Activated naive CD4-positive, alpha-beta T cell treated with anti-CD3 and anti-CD28 coated beads for 36 hours (primary cell): ENCODE measurements at regions of chr1 and their contacts with region 1.

Region 1: GRCh38 chr1:12344596-12345349 is 114.9 kb downstream of the VPS13D start:
- DNase-seq: peak; percentile 59
- H3K4me3 Mint-ChIP-seq: peak overlapping the region; percentile 51
- H3K27ac Mint-ChIP-seq: peak overlapping the region; percentile 82
- H3K4me1 Mint-ChIP-seq: peaks cover 61% of the 10 kb centered on the region
- H3K27me3 Mint-ChIP-seq: no peaks in the 10 kb centered on the region

Region 2: GRCh38 chr1:12208764-12209494 is 135.8 kb before region 1 on chr1:
- CTCF ChIA-PET with region 1: no interaction called
- intact Hi-C with region 1: no loop called
- DNase-seq: peak; percentile 95
- H3K4me3 Mint-ChIP-seq: no peak overlapping the region
- H3K27ac Mint-ChIP-seq: peak overlapping the region; percentile 37
- H3K4me1 Mint-ChIP-seq: peaks cover 42% of the 10 kb centered on the region
- H3K27me3 Mint-ChIP-seq: no peaks in the 10 kb centered on the region

Region 3: DNA sequence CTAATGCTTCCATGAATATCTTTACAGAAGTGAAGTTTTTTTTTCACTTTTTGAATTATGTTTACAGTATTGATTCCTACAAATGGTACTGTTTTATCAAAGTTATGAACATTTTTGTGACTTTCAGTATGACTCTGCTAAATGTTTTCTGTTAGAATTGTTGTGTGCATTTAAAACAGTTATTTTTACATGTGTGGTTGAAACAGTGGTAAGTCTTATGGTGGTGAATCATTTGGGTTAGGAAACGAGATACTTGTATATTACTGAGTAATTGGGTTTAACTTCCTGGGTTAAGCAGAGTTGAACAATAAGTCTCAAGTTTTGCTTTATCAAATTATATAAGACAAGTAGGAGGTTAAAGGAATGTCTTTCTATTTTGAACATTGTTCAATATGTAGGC is 48.1 kb before region 1 on chr1:
- CTCF ChIA-PET with region 1: no interaction called
- intact Hi-C with region 1: loop called (anchors 1 kb)
- DNase-seq: no peak
- H3K4me3 Mint-ChIP-seq: no peak overlapping the region
- H3K27ac Mint-ChIP-seq: peak overlapping the region; percentile 51
- H3K4me1 Mint-ChIP-seq: peaks cover 30% of the 10 kb centered on the region
- H3K27me3 Mint-ChIP-seq: no peaks in the 10 kb centered on the region

Region 4: GRCh38 chr1:12386130-12386529 is 41.4 kb after region 1 on chr1:
- CTCF ChIA-PET with region 1: no interaction called
- intact Hi-C with region 1: loop called (anchors 1 kb)
- DNase-seq: peak; percentile 68
- H3K4me3 Mint-ChIP-seq: no peak overlapping the region
- H3K27ac Mint-ChIP-seq: peak overlapping the region; percentile 80
- H3K4me1 Mint-ChIP-seq: peaks cover 43% of the 10 kb centered on the region
- H3K27me3 Mint-ChIP-seq: no peaks in the 10 kb centered on the region

Region 5: GRCh38 chr1:12511516-12512468 is 167.0 kb after region 1 on chr1:
- CTCF ChIA-PET with region 1: no interaction called
- intact Hi-C with region 1: loop called (anchors 5 kb)
- DNase-seq: no peak
- H3K4me3 Mint-ChIP-seq: peak overlapping the region; percentile 80
- H3K27ac Mint-ChIP-seq: peak overlapping the region; percentile 97
- H3K4me1 Mint-ChIP-seq: peaks cover 61% of the 10 kb centered on the region
- H3K27me3 Mint-ChIP-seq: no peaks in the 10 kb centered on the region

Region 6: DNA sequence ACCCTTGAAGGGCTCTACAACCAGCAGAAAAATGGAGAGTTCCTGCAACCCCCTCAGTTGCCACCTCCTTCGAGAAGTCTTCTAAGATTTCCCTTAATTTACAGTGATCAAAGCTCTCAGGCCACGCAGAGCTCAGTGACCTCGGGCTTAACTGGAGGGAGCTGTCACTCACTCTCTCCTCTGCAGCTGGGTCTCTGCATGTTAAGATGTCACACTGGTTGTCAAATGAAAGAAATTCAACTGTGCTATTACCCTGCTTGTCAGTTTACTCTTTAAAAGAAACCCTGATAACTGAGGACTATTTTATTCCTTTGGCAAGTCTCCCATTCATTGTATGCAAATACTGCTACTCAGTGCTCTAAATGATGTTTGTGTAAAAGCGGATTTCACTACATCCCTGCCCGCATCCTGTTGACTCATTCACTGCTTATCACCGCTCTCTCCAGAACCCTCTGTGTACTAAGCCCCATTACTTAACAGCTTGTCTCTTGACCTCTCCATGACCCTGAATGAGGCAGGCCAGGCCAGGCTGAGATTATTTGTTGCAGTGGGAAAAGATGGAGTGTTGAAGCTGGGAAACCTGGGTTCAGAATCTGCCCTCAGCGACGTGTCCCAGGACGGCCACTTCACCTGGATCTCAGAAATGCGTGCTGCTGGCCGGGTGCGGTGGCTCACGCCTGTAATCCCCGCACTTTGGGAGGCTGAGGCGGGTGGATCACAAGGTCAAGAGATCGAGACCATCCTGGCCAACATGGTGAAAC is 259.5 kb after region 1 on chr1:
- CTCF ChIA-PET with region 1: no interaction called
- intact Hi-C with region 1: loop called (anchors 1 kb)
- DNase-seq: peak; percentile 90
- H3K4me3 Mint-ChIP-seq: peak overlapping the region; percentile 10
- H3K27ac Mint-ChIP-seq: peak overlapping the region; percentile 79
- H3K4me1 Mint-ChIP-seq: peaks cover 71% of the 10 kb centered on the region
- H3K27me3 Mint-ChIP-seq: no peaks in the 10 kb centered on the region